ENCODE measurements at regions of chr12 and their contacts with region 1.

Region 1: GRCh38 chr12:14723763-14724162 is 27.4 kb upstream of the GUCY2C start:
- DNase-seq: no peak
- ATAC-seq: peak; percentile 76
- H3K4me3 Mint-ChIP-seq: no peak overlapping the region
- H3K27ac Mint-ChIP-seq: no peak overlapping the region
- H3K4me1 Mint-ChIP-seq: no peaks in the 10 kb centered on the region
- H3K27me3 Mint-ChIP-seq: peaks cover 11% of the 10 kb centered on the region
- CTCF ChIP-seq: peak; percentile 25

Region 2: GRCh38 chr12:14678547-14679150 is 45.1 kb before region 1 on chr12:
- CTCF ChIA-PET with region 1: no interaction called
- POLR2A ChIA-PET with region 1: no interaction called
- intact Hi-C with region 1: no loop called
- DNase-seq: no peak
- ATAC-seq: no peak
- H3K4me3 Mint-ChIP-seq: no peak overlapping the region
- H3K27ac Mint-ChIP-seq: no peak overlapping the region
- H3K4me1 Mint-ChIP-seq: no peaks in the 10 kb centered on the region
- H3K27me3 Mint-ChIP-seq: peaks cover 8% of the 10 kb centered on the region
- CTCF ChIP-seq: no peak

Region 3: DNA sequence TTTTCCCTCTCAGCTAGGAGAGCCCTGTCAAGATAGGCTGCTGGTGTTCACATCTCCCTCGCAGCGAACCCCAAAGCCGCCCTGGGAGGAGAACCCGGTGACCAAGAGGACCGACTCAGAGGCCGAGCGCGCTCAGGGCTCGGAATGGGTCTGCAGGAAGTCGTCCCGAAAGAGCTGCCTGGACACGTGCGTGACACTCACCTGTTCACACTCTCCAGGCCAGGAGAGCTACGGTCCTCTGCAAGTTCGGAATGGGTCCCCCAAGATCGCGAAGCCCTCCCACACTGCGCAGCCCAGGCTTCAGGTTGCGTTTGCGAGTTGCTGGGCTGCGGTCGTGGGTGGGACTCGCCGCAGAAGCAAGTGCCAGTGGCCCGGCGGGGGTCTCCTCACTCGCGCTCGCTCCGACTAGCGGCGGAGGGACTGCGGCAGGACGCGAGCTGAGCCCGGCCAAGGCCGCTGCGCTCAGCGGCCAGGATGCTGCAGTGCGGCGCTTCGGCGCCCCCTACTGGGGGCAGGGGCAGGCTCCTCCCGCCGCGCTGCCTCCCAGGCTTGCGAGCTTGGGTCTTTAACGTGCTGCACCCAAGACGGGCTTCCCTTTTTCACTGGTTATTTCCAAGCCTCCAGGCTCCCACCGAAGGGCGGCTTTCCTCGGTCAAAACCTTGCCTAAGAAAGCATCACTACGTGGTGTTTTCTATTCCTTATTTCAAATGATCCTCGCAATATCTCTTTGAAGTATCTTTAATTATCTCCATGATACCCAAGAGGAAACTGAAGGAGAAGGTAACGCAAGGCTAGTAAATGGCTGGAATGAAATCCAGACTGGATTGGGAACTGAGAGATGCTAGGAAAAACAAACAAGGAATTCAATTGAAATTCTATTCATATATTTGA is 497.5 kb after region 1 on chr12 and contains the start of gene RERG:
- CTCF ChIA-PET with region 1: interaction called, 10 read pairs
- POLR2A ChIA-PET with region 1: no interaction called
- intact Hi-C with region 1: loop called (anchors 1 kb)
- DNase-seq: peak; percentile 72
- ATAC-seq: peak; percentile 99
- H3K4me3 Mint-ChIP-seq: peak within 1 kb of the TSS; percentile 68
- H3K27ac Mint-ChIP-seq: no peak within 1 kb of the TSS
- H3K4me1 Mint-ChIP-seq: peaks cover 7% of the 10 kb centered on the region
- H3K27me3 Mint-ChIP-seq: peaks cover 33% of the 10 kb centered on the region
- CTCF ChIP-seq: peak; percentile 69
- total RNA-seq, gene RERG: not detected in 2 replicates

Region 4: DNA sequence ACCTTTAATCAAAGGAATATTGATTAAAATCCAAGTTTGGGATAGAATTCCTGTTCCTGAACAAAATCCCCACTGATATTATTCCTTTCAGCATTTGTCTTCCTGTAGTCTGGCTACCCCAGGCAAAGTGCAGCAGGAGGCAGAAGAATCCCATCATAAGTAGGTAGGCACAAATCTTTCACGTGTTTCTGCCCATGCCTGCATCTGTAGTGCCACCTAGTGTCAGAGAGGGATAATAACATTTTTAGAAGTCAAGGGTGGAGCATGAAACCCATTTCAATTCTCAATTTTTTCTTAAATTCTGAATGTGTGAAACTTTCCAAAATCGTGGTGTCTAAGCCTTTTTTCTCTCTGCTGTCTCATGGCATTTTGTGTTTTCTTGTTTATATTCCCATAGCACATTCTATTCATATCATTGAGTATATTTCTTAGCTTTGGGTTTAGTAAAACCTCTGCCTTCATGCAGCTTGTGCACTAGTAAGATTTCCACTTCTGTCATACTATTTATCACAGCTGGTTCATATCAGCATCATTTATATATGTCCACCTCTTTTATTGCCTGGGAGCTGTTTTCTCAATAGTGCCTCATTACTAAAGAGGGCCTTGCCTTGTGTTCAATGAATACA is 545.3 kb after region 1 on chr12:
- CTCF ChIA-PET with region 1: interaction called, 3 read pairs
- POLR2A ChIA-PET with region 1: no interaction called
- intact Hi-C with region 1: loop called (anchors 1 kb)
- DNase-seq: no peak
- ATAC-seq: peak; percentile 62
- H3K4me3 Mint-ChIP-seq: no peak overlapping the region
- H3K27ac Mint-ChIP-seq: no peak overlapping the region
- H3K4me1 Mint-ChIP-seq: no peaks in the 10 kb centered on the region
- H3K27me3 Mint-ChIP-seq: peaks cover 5% of the 10 kb centered on the region
- CTCF ChIP-seq: peak; percentile 76

Measured in activated B cell treated with CpG ODN at 0.5 μM for 24 hours (primary cell).